K562 (cell line): ENCODE measurements at regions of chr10 and their contacts with region 1.

Region 1: GRCh38 chr10:71860243-71861029 is 9.4 kb upstream of the PSAP start:
- DNase-seq: peak; percentile 93 to 98 (median 94)
- ATAC-seq: peak; percentile 95
- H3K4me3 ChIP-seq: no peak overlapping the region
- H3K27ac ChIP-seq: peak overlapping the region; percentile 98
- H3K4me1 ChIP-seq: peaks cover 44 to 47% of the 10 kb centered on the region in 2 experiments
- H3K27me3 ChIP-seq: no peaks in the 10 kb centered on the region
- CTCF ChIP-seq: 0 out of 6 replicates have a peak, but pooled peaks of 1 of the 3 experiments have one; percentile 1
- EP300 ChIP-seq: peak; percentile 94
- POLR2A ChIP-seq: peak; percentile 74
- RAD21 ChIP-seq: peak in 1 of 2 experiments; percentile 51; a peak in 2 of 4 replicates

Region 2: GRCh38 chr10:71795248-71795647 is 65.2 kb before region 1 on chr10:
- CTCF ChIA-PET with region 1: no interaction called
- POLR2A ChIA-PET with region 1: no interaction called
- in situ Hi-C with region 1: no loop called
- intact Hi-C with region 1: no loop called
- DNase-seq: peak; percentile 62 to 77 (median 69)
- ATAC-seq: peak; percentile 38; the same call in 1 of the 3 replicates
- H3K4me3 ChIP-seq: no peak overlapping the region
- H3K27ac ChIP-seq: no peak overlapping the region
- H3K4me1 ChIP-seq: peaks cover 20 to 28% of the 10 kb centered on the region in 2 experiments
- H3K27me3 ChIP-seq: peaks cover 18 to 19% of the 10 kb centered on the region in 2 experiments; a peak in 4 of 5 replicates
- CTCF ChIP-seq: no peak
- EP300 ChIP-seq: no peak
- POLR2A ChIP-seq: no peak
- RAD21 ChIP-seq: no peak

Region 3: GRCh38 chr10:71873582-71874211 is 13.3 kb after region 1 on chr10:
- CTCF ChIA-PET with region 1: no interaction called
- POLR2A ChIA-PET with region 1: interaction called, 34 read pairs
- in situ Hi-C with region 1: no loop called
- intact Hi-C with region 1: no loop called
- DNase-seq: no peak
- ATAC-seq: no peak
- H3K4me3 ChIP-seq: no peak overlapping the region
- H3K27ac ChIP-seq: no peak overlapping the region
- H3K4me1 ChIP-seq: peaks cover 12 to 40% of the 10 kb centered on the region in 2 experiments
- H3K27me3 ChIP-seq: no peaks in the 10 kb centered on the region
- CTCF ChIP-seq: no peak
- EP300 ChIP-seq: no peak
- POLR2A ChIP-seq: no peak
- RAD21 ChIP-seq: no peak

Region 4: DNA sequence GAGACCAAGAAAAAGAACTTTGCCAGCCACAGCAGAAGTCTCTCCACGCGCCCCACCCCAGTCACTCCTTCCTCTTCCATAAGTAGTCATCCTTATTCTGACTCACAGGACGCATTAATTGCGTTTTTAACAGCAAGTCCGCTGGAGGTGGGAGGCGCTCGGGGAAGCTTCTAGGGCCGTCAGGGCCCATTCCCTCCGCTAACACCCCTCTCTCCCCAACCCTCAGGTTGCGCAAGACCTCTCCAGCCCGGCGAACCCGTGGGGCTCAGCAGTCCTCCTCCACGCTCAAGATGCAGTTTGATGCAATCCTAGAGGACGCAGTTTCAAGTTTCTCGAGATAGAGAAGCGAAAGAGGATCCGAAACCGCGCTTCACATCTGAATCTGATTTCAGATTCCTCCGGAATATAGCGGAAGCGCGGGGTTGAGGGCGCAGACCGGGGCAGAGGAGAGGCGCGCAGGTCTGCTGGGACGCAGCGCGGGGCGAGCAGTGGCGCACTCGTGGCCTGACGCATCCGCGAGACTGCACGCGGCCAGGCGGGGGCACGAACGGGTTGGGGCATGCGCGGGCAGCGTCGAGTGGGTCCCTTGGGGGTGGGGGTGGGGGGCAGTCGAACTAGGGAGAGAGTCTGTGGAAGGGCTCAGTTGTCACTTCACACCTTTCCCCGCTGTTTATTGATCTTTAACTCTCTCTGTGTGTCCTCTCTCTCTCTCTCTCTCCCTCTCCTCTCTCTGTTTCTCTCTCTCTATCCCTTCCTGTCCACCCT is 28.4 kb after region 1 on chr10:
- CTCF ChIA-PET with region 1: no interaction called
- POLR2A ChIA-PET with region 1: interaction called, 5 read pairs
- in situ Hi-C with region 1: no loop called
- intact Hi-C with region 1: loop called (anchors 2 kb)
- DNase-seq: peak; percentile 76 to 88 (median 84)
- ATAC-seq: peak; percentile 91
- H3K4me3 ChIP-seq: peak overlapping the region; percentile 47
- H3K27ac ChIP-seq: peak overlapping the region; percentile 76
- H3K4me1 ChIP-seq: peaks cover 25 to 35% of the 10 kb centered on the region in 2 experiments
- H3K27me3 ChIP-seq: no peaks in the 10 kb centered on the region
- CTCF ChIP-seq: peak; percentile 13 to 66 (median 36); a peak in 4 of 6 replicates
- EP300 ChIP-seq: 0 out of 2 replicates have a peak, but pooled peaks have one; percentile 22
- POLR2A ChIP-seq: peak; percentile 74
- RAD21 ChIP-seq: peak; percentile 33 to 38